ENCODE measurements at regions of chr1 and their contacts with region 1.

Region 1: GRCh38 chr1:233790662-233791375 is 113.7 kb upstream of the SLC35F3 start:
- DNase-seq: no peak
- ATAC-seq: peak; percentile 78
- H3K4me3 ChIP-seq: no peak overlapping the region
- H3K27ac ChIP-seq: no peak overlapping the region
- H3K4me1 ChIP-seq: no peaks in the 10 kb centered on the region
- H3K27me3 ChIP-seq: no peaks in the 10 kb centered on the region

Region 2: DNA sequence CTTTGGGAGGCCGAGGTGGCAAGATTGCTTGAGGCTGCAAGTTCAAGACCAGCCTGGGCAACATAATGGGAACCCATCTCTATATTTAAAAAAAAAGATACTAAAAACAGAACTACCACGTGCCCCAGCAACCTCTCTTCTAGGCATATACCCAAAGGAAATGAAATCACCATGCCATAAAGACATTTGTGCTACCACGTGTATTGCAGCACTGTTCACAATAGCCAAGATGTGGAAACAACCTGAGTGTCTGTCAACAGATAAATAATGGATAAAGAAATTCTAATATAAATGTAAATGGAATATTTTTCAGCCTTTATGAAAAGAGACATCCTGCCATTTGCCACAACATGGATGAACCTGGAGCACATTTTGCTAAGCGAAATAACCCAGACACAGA is 623.9 kb before region 1 on chr1:
- intact Hi-C with region 1: no loop called
- DNase-seq: no peak
- ATAC-seq: no peak
- H3K4me3 ChIP-seq: no peak overlapping the region
- H3K27ac ChIP-seq: no peak overlapping the region
- H3K4me1 ChIP-seq: no peaks in the 10 kb centered on the region
- H3K27me3 ChIP-seq: no peaks in the 10 kb centered on the region

Region 3: GRCh38 chr1:233440951-233441401 is 349.8 kb before region 1 on chr1:
- intact Hi-C with region 1: loop called (anchors 1 to 2 kb)
- DNase-seq: no peak
- ATAC-seq: peak; percentile 36
- H3K4me3 ChIP-seq: no peak overlapping the region
- H3K27ac ChIP-seq: no peak overlapping the region
- H3K4me1 ChIP-seq: no peaks in the 10 kb centered on the region
- H3K27me3 ChIP-seq: no peaks in the 10 kb centered on the region

Region 4: DNA sequence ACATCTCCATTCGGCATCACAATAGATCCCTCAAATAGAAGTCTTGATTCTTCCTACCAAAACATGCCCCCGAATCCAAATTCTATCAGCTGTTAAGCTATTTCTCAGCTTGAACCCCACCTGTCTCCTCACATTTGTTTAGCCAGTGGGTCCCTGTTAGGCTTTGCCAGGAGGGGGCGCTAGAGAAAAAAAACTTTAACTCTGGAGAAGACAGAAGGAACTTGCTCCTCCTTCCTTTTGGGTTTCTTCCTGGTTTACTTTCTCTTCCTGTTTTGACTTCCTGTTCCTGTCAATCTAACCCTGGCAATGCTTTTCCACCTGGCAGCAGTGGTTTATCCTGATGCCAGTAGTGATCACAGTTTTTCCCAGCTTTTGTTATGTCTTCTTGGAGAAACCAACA is 272.5 kb before region 1 on chr1:
- intact Hi-C with region 1: loop called in 1 of 2 experiments (anchors 10 kb)
- DNase-seq: no peak
- ATAC-seq: no peak
- H3K4me3 ChIP-seq: no peak overlapping the region
- H3K27ac ChIP-seq: no peak overlapping the region
- H3K4me1 ChIP-seq: no peaks in the 10 kb centered on the region
- H3K27me3 ChIP-seq: peaks cover 0 to 3% of the 10 kb centered on the region in 2 donors